GM12878 (cell line): ENCODE measurements at regions of chr9 and their contacts with region 1.

Region 1: GRCh38 chr9:97615439-97616072 is 17.6 kb downstream of the TSTD2 start:
- DNase-seq: no peak
- ATAC-seq: peak; percentile 73
- H3K4me3 ChIP-seq: no peak overlapping the region
- H3K27ac ChIP-seq: no peak overlapping the region
- H3K4me1 ChIP-seq: peaks cover 10% of the 10 kb centered on the region; the same call in 1 of the 2 replicates
- H3K27me3 ChIP-seq: no peaks in the 10 kb centered on the region
- CTCF ChIP-seq: peak; percentile 63 to 84 (median 80)
- EP300 ChIP-seq: no peak
- POLR2A ChIP-seq: no peak
- RAD21 ChIP-seq: peak; percentile 86

Region 2: GRCh38 chr9:96854073-96854876 is 761.3 kb before region 1 on chr9 and contains the start of gene ZNF782:
- CTCF ChIA-PET with region 1: interaction called, 25 read pairs
- POLR2A ChIA-PET with region 1: no interaction called
- RAD21 ChIA-PET with region 1: interaction called, 17 read pairs
- SMC1A ChIA-PET with region 1: interaction called, 3 read pairs
- in situ Hi-C with region 1: loop called (anchors 25 kb)
- intact Hi-C with region 1: no loop called
- DNase-seq: peak; percentile 60
- ATAC-seq: peak; percentile 96
- H3K4me3 ChIP-seq: peak within 1 kb of the TSS; percentile 83
- H3K27ac ChIP-seq: peak within 1 kb of the TSS; percentile 45
- H3K4me1 ChIP-seq: 0 out of 2 replicates have a peak, but pooled peaks cover 7% of the 10 kb centered on the region
- H3K27me3 ChIP-seq: no peaks in the 10 kb centered on the region
- CTCF ChIP-seq: no peak
- EP300 ChIP-seq: no peak
- POLR2A ChIP-seq: peak; percentile 58; the same call in 1 of the 2 replicates
- RAD21 ChIP-seq: no peak
- polyA plus RNA-seq, gene ZNF782: 0.55 to 0.82 TPM

Region 3: GRCh38 chr9:97406620-97407177 is 208.9 kb before region 1 on chr9:
- CTCF ChIA-PET with region 1: interaction called, 24 read pairs
- POLR2A ChIA-PET with region 1: no interaction called
- RAD21 ChIA-PET with region 1: interaction called, 19 read pairs
- SMC1A ChIA-PET with region 1: interaction called, 9 read pairs
- in situ Hi-C with region 1: loop called (anchors 5 kb)
- intact Hi-C with region 1: loop called (anchors 1 kb)
- DNase-seq: no peak
- ATAC-seq: peak; percentile 60
- H3K4me3 ChIP-seq: no peak overlapping the region
- H3K27ac ChIP-seq: no peak overlapping the region
- H3K4me1 ChIP-seq: no peaks in the 10 kb centered on the region
- H3K27me3 ChIP-seq: no peaks in the 10 kb centered on the region; a peak in 1 of 4 replicates
- CTCF ChIP-seq: no peak
- EP300 ChIP-seq: no peak
- POLR2A ChIP-seq: no peak
- RAD21 ChIP-seq: no peak

Region 4: GRCh38 chr9:97459099-97459725 is 156.3 kb before region 1 on chr9:
- CTCF ChIA-PET with region 1: interaction called, 515 read pairs
- POLR2A ChIA-PET with region 1: no interaction called
- RAD21 ChIA-PET with region 1: interaction called, 5 read pairs
- SMC1A ChIA-PET with region 1: interaction called, 15 read pairs
- in situ Hi-C with region 1: no loop called
- intact Hi-C with region 1: no loop called
- DNase-seq: no peak
- ATAC-seq: no peak
- H3K4me3 ChIP-seq: no peak overlapping the region
- H3K27ac ChIP-seq: no peak overlapping the region
- H3K4me1 ChIP-seq: no peaks in the 10 kb centered on the region
- H3K27me3 ChIP-seq: no peaks in the 10 kb centered on the region
- CTCF ChIP-seq: no peak
- EP300 ChIP-seq: no peak
- POLR2A ChIP-seq: no peak
- RAD21 ChIP-seq: no peak

Region 5: DNA sequence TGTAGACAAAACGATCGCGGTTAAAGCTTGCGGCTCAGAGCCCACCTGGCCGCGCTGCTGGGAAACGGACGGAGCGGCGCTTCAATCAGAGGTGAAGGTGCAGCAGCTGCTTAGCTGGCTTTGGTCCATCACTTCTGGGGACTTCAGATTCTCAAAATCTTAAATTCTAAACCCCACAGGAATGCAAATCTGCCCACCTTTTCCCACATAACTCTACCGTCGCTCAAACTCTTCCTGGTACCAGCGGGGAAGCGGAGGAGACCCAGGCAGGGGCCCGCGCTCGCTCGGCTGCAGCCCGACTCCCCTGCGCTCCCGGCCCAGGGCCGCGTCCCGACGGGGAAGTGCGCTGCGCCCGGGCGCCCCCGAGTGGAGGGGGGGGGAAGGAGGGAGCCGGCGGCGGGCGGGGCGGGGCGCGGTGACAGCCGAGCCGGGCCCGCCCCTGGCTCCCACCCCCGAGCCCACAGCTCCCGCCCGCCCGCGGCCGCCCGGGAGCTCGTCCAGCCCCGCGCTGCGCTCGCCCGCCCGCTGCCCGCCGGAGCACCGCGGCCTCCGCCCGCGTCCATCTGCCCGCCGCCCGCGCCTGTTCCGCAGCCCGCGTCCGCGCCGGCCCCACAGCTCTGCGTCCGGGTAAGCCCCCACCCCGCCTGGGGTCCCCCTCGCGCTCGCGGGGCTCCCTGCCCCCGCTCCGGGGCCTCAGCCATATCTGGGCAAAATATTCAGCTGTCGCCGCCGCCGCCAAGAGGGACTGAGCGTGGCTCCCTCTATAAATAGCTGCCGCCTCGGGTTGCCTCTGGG is 114.2 kb before region 1 on chr9 and contains the start of gene TMOD1:
- CTCF ChIA-PET with region 1: interaction called, 33 read pairs
- POLR2A ChIA-PET with region 1: interaction called, 3 read pairs
- RAD21 ChIA-PET with region 1: interaction called, 40 read pairs
- SMC1A ChIA-PET with region 1: interaction called, 38 read pairs
- in situ Hi-C with region 1: no loop called
- intact Hi-C with region 1: no loop called
- DNase-seq: no peak
- ATAC-seq: peak; percentile 73
- H3K4me3 ChIP-seq: peak within 1 kb of the TSS; percentile 86
- H3K27ac ChIP-seq: peak within 1 kb of the TSS; percentile 70
- H3K4me1 ChIP-seq: peaks cover 28% of the 10 kb centered on the region
- H3K27me3 ChIP-seq: no peaks in the 10 kb centered on the region
- CTCF ChIP-seq: peak; percentile 17 to 37 (median 27); a peak in 3 of 6 replicates
- EP300 ChIP-seq: no peak
- POLR2A ChIP-seq: peak; percentile 45; the same call in 1 of the 2 replicates
- RAD21 ChIP-seq: peak; percentile 39; the same call in 1 of the 2 replicates
- polyA plus RNA-seq, gene TMOD1: 11.1 to 16.9 TPM

Region 6: DNA sequence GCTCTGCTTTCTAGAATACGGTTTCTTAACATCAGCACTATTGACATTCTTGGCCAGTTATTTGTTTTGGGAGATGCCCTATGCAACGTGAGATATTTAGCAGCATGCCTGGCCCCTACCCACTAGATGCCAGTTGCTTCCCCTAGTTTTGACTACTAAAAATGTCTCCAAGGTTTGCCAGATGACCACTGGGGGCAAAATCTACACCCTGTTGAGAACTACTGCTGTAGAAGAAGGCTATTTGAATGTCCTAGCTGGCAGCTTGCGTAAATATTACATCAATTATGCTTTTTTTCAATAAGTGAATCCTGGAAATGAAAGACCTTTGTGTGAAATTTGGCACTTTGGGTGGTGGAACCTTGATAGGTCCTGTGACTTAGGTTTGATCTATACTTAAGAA is 23.1 kb after region 1 on chr9:
- CTCF ChIA-PET with region 1: interaction called, 29 read pairs
- POLR2A ChIA-PET with region 1: interaction called, 6 read pairs
- RAD21 ChIA-PET with region 1: interaction called, 17 read pairs
- SMC1A ChIA-PET with region 1: interaction called, 16 read pairs
- in situ Hi-C with region 1: no loop called
- intact Hi-C with region 1: no loop called
- DNase-seq: no peak
- ATAC-seq: peak; percentile 75
- H3K4me3 ChIP-seq: peak overlapping the region; percentile 49; the same call in 1 of the 2 replicates
- H3K27ac ChIP-seq: no peak overlapping the region
- H3K4me1 ChIP-seq: no peaks in the 10 kb centered on the region
- H3K27me3 ChIP-seq: no peaks in the 10 kb centered on the region
- CTCF ChIP-seq: peak; percentile 16 to 41 (median 37); a peak in 4 of 6 replicates
- EP300 ChIP-seq: no peak
- POLR2A ChIP-seq: no peak
- RAD21 ChIP-seq: no peak